PC-3 (cell line): ENCODE measurements at regions of chr7 and their contacts with region 1.

Region 1: DNA sequence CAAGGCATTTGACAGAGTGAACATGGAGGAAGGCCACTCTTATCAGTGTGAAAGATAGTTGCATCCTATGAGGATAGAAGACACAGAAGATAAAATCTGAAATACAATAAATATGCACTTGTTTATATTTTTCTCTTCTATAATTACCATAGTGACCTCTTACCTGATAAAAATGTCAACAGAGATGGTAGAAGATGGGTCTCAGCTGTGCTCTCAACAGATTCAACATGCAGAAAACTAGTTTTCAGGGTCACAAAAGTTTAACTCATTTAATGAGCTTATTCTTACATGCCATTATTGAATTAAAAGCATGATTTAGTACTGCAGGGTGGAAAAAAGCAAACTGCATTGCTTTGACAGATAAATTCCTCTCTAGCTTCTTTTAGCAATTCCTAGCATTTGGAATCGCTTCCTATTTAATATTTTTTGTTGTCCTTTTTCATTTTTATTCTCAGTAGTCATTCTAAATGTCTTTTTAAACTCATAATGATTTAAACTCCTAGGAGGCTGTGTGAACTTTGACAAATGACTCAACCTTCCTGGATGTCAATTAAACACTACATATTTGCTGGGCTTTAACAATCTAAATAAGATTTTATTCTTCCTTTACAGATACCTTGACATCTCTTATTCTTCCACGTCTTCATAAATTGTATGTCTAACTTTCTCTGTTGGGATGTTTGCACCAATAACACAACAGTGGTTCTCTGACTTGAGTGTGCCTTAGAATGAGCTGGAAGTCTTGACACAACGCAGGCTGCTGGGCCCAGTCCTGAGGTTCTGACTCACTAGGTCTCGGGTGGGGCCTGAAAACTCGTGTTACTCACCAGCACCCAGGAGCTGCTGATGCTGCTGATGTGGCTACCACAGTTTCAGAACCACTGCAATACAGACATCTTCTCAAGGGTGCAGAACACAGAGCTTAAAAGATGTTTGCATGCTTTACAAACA is 565.5 kb upstream of the IGFBP3 start:
- DNase-seq: peak; percentile 80
- ATAC-seq: peak; percentile 82
- H3K4me3 ChIP-seq: peak overlapping the region; percentile 7; the same call in 1 of the 2 replicates
- H3K27ac ChIP-seq: peak overlapping the region; percentile 88
- H3K4me1 ChIP-seq: peaks cover 39% of the 10 kb centered on the region
- H3K27me3 ChIP-seq: no peaks in the 10 kb centered on the region
- CTCF ChIP-seq: no peak

Region 2: GRCh38 chr7:45890902-45891461 is 595.5 kb before region 1 on chr7:
- CTCF ChIA-PET with region 1: no interaction called
- POLR2A ChIA-PET with region 1: no interaction called
- intact Hi-C with region 1: no loop called
- DNase-seq: peak; percentile 78
- ATAC-seq: no peak
- H3K4me3 ChIP-seq: no peak overlapping the region
- H3K27ac ChIP-seq: no peak overlapping the region
- H3K4me1 ChIP-seq: peaks cover 26% of the 10 kb centered on the region
- H3K27me3 ChIP-seq: no peaks in the 10 kb centered on the region
- CTCF ChIP-seq: peak; percentile 82

Region 3: GRCh38 chr7:46068159-46068558 is 418.4 kb before region 1 on chr7:
- CTCF ChIA-PET with region 1: no interaction called
- POLR2A ChIA-PET with region 1: no interaction called
- intact Hi-C with region 1: no loop called
- DNase-seq: no peak
- ATAC-seq: no peak
- H3K4me3 ChIP-seq: no peak overlapping the region
- H3K27ac ChIP-seq: no peak overlapping the region
- H3K4me1 ChIP-seq: no peaks in the 10 kb centered on the region
- H3K27me3 ChIP-seq: no peaks in the 10 kb centered on the region
- CTCF ChIP-seq: no peak

Region 4: DNA sequence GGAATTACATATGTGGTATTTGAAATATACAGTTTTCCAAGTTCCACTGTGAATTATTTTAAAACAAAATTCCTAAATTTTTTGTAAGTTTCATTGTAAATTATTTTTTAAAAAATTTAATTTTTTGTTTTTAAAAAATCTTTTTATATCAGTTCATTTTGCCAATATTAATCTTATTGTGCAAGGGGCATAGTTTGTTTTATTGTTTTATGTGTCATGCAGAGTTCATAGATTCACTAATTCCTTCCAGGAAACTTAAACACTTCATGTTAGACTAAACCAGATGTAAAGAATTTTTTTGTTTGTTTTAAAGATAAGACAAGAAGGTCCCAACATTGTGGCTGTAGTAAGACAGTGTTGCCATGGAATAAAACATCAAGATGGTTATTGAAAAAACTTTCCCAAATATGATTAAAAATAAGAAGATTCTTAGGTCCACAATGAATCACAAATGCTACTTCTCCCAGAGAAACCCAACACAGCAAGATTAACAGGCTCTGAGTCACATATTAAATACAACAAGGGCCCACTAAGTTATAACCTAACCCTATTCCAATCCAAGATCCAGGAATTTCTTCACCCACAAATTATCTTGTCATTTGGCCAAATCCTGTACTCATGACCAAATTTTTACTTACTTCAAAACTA is 100.7 kb before region 1 on chr7:
- CTCF ChIA-PET with region 1: no interaction called
- POLR2A ChIA-PET with region 1: no interaction called
- intact Hi-C with region 1: loop called (anchors 5 kb)
- DNase-seq: peak; percentile 94
- ATAC-seq: peak; percentile 98
- H3K4me3 ChIP-seq: no peak overlapping the region
- H3K27ac ChIP-seq: peak overlapping the region; percentile 95
- H3K4me1 ChIP-seq: peaks cover 27% of the 10 kb centered on the region
- H3K27me3 ChIP-seq: no peaks in the 10 kb centered on the region
- CTCF ChIP-seq: no peak

Region 5: DNA sequence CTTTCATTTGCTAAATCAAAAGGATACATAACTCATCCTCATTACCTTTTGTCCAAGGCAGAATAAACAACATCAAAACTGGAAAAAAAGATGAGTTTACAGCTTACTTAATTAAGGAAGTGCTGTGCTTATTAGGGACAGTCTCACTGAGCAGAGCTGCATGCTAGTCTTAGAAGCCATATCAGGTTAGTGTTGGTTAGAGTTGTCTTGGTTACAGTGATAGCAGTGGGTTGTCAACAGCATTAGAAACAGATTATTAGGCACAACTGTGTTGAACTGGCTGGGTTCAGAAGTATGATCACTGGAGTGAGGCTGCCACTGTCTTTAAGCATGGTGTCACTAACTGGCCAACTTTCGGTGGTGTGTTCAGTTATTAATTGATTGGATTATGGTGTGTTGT is 61.6 kb before region 1 on chr7:
- CTCF ChIA-PET with region 1: no interaction called
- POLR2A ChIA-PET with region 1: no interaction called
- intact Hi-C with region 1: no loop called
- DNase-seq: no peak
- ATAC-seq: no peak
- H3K4me3 ChIP-seq: no peak overlapping the region
- H3K27ac ChIP-seq: no peak overlapping the region
- H3K4me1 ChIP-seq: no peaks in the 10 kb centered on the region
- H3K27me3 ChIP-seq: no peaks in the 10 kb centered on the region
- CTCF ChIP-seq: no peak

Region 6: GRCh38 chr7:46461334-46461777 is 25.2 kb before region 1 on chr7:
- CTCF ChIA-PET with region 1: no interaction called
- POLR2A ChIA-PET with region 1: no interaction called
- intact Hi-C with region 1: no loop called
- DNase-seq: no peak
- ATAC-seq: no peak
- H3K4me3 ChIP-seq: no peak overlapping the region
- H3K27ac ChIP-seq: no peak overlapping the region
- H3K4me1 ChIP-seq: no peaks in the 10 kb centered on the region
- H3K27me3 ChIP-seq: no peaks in the 10 kb centered on the region
- CTCF ChIP-seq: no peak